Gastrocnemius medialis (tissue), 4 donors: ENCODE measurements at regions of chr5 and their contacts with region 1.

Region 1: GRCh38 chr5:178146020-178146820 is 7.5 kb downstream of the NHP2 start:
- DNase-seq: peak in 1 of 2 donors; percentile 53
- ATAC-seq: peak in 1 of 2 donors; percentile 47
- H3K4me3 ChIP-seq: no peak overlapping the region
- H3K27ac ChIP-seq: no peak overlapping the region
- H3K4me1 ChIP-seq: peaks cover 0 to 7% of the 10 kb centered on the region in 2 donors
- H3K27me3 ChIP-seq: no peaks in the 10 kb centered on the region
- CTCF ChIP-seq: peak; percentile 65 to 74 (median 67)
- POLR2A ChIP-seq: no peak

Region 2: GRCh38 chr5:178075840-178076548 is 70.2 kb before region 1 on chr5:
- in situ Hi-C with region 1: no loop called
- intact Hi-C with region 1: loop called (anchors 1 kb)
- DNase-seq: peak; percentile 31 to 46
- ATAC-seq: peak; percentile 65 to 87
- H3K4me3 ChIP-seq: no peak overlapping the region
- H3K27ac ChIP-seq: no peak overlapping the region
- H3K4me1 ChIP-seq: no peaks in the 10 kb centered on the region
- H3K27me3 ChIP-seq: peaks cover 0 to 17% (median 2%) of the 10 kb centered on the region in 3 donors
- CTCF ChIP-seq: peak; percentile 80 to 89 (median 86)
- POLR2A ChIP-seq: no peak

Region 3: DNA sequence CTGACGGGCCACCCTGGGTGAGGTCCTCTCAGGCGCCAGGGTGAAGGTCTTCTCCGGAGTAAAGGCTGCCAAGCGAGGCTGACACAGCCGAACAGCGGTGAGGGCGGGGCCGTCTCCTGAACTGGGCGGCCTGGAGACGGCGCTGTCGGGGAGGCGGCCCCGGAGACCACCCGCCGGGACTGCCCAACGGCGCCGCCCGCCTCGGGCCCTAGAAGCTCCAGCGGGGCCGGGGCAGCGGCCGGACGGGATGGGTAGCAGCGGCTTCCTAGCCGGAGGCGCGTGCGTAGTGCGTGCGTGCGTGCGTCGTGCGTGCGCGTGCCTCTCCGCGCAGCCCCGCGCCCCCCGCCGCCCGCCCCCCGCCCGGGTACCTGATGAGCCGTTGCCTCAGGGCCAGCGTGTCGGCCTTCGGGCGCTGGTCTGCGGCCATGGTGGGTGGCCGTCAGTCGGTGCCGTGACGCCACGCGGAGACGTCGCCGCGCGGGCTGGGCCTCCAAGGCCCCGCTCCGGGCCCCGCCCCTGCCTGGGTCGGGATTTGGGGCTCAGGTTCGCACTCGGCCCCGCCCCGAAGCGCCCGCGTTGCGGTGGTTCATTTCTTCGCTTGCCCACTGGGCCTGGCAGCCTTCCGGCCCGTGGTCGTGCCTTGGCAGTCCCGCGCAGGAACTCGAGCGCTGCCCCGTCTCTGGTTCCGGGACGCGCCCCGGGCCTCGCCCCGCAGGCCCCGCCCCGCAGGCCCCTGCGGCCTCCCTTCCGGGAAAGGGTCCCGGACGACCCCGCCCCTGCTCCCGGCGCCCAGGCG is 86.1 kb after region 1 on chr5 and contains the start of gene PHYKPL:
- in situ Hi-C with region 1: no loop called
- intact Hi-C with region 1: no loop called
- DNase-seq: peak; percentile 39 to 76
- ATAC-seq: peak; percentile 42 to 55
- H3K4me3 ChIP-seq: peak within 1 kb of the TSS; percentile 60 to 76 (median 70)
- H3K27ac ChIP-seq: peak within 1 kb of the TSS; percentile 87 to 99 (median 94)
- H3K4me1 ChIP-seq: peaks cover 53 to 58% of the 10 kb centered on the region in 2 donors
- H3K27me3 ChIP-seq: no peaks in the 10 kb centered on the region
- CTCF ChIP-seq: peak in 1 of 5 experiments; percentile 6
- POLR2A ChIP-seq: peak; percentile 79 to 80
- total RNA-seq, gene PHYKPL: 25.0 to 54.6 (median 33.7) TPM